ENCODE measurements at regions of chr6 and their contacts with region 1.

Region 1: DNA sequence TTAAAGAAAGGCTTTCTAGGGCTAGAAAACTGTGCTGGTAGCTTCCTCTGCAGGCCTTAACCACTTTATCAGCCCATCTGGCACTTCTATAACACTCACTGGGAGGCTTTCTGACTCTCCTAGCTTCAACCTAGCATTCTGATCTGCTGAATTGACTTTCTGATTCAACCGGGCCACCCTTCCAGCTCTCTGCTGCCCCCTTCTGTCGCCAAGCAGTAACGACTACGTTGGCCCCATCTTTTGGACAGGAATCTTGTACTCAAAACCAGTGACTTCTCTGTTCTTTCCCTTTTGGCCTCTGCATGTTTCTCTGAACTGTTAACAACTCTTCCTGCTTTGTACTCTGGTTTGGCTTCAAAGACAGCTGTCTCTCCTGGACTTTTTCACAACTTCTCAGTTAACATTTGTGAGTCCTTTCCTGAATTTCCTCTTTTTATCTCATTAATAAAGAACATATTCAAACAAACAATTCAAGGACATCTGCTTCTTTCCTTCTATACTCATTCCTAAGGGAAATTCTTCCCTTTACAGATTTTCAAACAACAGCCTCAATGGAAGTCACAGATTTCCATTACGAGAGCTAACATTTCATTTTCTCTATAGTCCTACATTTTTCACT is 43.9 kb upstream of the FAM135A start:
- DNase-seq: peak; percentile 10 to 91 (median 76)

Region 2: GRCh38 chr6:70221025-70221714 is 148.3 kb before region 1 on chr6:
- intact Hi-C with region 1: loop called (anchors 5 kb)
- DNase-seq: peak in 12 of 42 donors; percentile 17 to 58 (median 26)

Region 3: GRCh38 chr6:70231311-70231710 is 138.1 kb before region 1 on chr6:
- intact Hi-C with region 1: no loop called
- DNase-seq: no peak

Region 4: DNA sequence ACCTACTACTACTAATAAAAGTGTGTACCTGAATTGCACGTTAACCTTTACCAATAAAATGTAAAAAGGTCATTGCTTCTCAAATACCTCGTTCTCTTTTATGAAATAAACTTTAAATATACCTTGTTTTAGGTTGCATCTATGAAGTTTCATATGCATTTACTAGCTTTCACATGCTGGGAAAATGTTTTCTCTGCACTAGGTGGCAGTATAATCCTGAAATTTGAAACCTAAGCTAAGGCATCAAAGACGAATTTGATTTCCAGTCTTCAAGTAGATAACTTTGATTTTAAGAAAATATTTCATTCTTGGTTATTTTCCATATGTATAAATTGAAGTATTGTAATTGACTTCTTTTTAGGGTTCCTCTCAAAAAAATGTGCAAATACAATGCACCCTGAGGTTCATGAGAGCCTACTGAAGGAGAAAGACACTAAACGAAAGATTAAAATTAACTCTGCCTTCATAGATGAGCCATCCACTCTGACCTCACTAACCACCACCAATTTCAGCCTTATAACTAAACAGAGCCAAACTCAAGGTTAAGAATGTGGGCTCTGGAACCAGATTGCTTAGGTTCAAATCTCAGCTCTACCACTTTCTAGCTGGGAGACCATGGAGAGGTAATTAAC is 59.3 kb before region 1 on chr6:
- intact Hi-C with region 1: loop called (anchors 5 kb)
- DNase-seq: peak in 9 of 42 donors; percentile 4 to 65 (median 9)

Measured in head of caudate nucleus (tissue), 42 donors.